ENCODE measurements at regions of chr1 and their contacts with region 1.

Region 1: DNA sequence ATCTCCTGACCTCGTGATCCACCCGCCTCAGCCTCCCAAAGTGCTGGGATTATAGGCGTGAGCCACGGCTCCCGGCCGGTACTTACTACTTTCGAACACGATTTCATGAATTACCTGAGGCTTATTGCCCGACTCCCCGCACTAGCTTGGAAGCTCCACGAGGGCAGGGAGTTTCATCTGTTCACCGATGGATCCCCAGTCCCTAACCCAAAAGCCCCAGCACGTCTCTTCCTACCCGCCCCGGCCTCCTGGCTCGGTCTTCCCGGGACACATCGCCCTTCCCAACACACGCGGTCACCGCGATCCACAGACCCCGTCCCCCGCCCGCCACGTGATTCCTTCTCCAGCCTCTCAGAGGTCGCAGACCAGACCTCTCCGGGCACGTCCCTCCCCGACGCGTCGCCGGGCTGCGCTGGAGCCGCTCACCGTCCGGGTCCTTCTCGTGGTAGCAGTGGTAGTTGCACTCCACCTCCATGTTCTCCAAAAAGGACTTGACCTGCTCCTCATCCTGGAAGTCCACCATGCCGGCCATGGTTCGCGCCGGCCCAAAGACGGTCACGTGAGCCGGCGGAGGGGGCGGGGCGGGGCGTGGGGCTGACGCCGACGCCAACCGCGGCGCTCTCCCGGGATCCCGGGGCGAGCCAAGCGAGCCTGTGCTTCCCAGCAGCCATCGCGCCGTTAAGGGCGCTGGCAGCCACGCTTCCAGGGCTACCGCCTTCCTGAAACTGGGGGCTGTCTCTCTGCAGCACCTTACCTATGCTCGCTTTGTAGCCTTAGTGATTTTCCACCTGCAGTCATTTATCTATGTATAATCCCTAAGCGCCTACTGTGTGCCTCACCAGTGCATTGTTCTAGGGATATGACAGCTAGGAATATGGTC is at the start of gene COA7:
- DNase-seq: peak; percentile 83
- H3K4me3 Mint-ChIP-seq: peak within 1 kb of the TSS; percentile 93
- H3K27ac Mint-ChIP-seq: peak within 1 kb of the TSS; percentile 83
- H3K4me1 Mint-ChIP-seq: peaks cover 29% of the 10 kb centered on the region
- H3K27me3 Mint-ChIP-seq: no peaks in the 10 kb centered on the region
- total RNA-seq, gene COA7: 17.9 to 18.7 TPM

Region 2: DNA sequence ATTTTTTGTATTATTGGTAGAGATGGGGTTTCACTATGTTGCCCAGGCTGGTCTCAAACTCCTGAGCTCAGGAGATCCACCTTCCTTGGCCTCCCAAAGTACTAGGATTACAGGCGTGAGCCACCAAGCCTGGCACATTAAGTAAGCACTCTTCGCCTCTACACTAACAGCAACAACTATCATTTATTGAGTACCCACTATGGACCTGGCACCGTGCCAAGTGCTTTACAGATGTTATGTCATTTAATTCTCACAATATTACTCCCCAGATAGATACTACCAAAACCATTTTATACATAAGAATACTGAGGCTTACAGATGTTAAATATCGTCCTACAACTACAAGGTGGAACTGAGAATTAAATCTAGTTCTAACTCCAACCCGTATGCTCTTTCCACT is 195.2 kb before region 1 on chr1:
- CTCF ChIA-PET with region 1: no interaction called
- POLR2A ChIA-PET with region 1: no interaction called
- intact Hi-C with region 1: no loop called
- DNase-seq: no peak
- H3K4me3 Mint-ChIP-seq: no peak overlapping the region
- H3K27ac Mint-ChIP-seq: no peak overlapping the region
- H3K4me1 Mint-ChIP-seq: no peaks in the 10 kb centered on the region
- H3K27me3 Mint-ChIP-seq: no peaks in the 10 kb centered on the region

Region 3: DNA sequence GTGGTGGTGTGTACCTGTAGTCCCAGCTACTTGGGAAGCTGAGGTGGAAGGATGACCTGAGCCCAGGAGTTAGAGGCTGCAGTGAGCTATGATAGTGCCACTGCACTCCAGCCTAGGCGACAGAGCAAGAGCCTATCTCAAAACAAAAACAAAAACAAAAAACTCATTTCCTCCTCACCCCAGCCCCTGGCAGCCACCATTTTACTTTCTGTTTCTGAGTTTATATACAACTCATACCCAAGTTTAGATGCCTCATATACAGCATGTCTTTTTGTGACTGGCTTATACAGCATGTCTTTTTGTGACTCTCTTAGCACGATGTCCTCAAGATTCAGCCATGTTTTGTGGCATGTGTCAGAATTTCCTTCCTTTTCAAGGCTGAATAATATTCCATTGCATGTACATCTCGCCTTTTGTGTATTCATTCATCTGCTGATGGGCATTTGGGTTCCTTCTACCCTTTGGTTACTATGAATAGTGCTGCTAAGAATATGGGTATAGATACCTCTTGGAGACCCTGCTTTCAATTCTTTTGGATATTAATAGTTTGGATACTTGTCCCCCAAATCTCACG is 14.6 kb before region 1 on chr1:
- CTCF ChIA-PET with region 1: interaction called, 16 read pairs
- POLR2A ChIA-PET with region 1: interaction called, 4 read pairs
- intact Hi-C with region 1: no loop called
- DNase-seq: no peak
- H3K4me3 Mint-ChIP-seq: no peak overlapping the region
- H3K27ac Mint-ChIP-seq: peak overlapping the region; percentile 28
- H3K4me1 Mint-ChIP-seq: peaks cover 6% of the 10 kb centered on the region
- H3K27me3 Mint-ChIP-seq: no peaks in the 10 kb centered on the region

Region 4: DNA sequence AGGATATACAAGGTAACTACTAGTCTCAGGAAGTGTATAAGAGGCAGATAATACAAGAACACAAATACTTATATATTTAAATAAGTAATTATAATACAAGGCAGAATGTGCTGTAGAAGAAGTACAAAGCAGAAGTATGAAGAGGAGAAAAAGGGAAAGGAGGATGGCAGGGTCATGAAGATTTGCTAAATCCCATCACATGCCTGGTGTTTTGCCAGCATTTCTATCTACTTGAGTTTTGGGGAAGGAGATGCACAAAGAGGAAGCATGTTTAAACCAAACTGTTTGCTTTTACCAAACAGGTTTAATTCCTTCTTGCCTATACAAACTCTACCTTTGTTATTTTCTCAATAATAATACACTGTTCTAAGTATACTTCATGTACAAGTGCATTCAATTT is 303.1 kb after region 1 on chr1:
- CTCF ChIA-PET with region 1: no interaction called
- POLR2A ChIA-PET with region 1: no interaction called
- intact Hi-C with region 1: no loop called
- DNase-seq: no peak
- H3K4me3 Mint-ChIP-seq: no peak overlapping the region
- H3K27ac Mint-ChIP-seq: no peak overlapping the region
- H3K4me1 Mint-ChIP-seq: no peaks in the 10 kb centered on the region
- H3K27me3 Mint-ChIP-seq: no peaks in the 10 kb centered on the region

Region 5: DNA sequence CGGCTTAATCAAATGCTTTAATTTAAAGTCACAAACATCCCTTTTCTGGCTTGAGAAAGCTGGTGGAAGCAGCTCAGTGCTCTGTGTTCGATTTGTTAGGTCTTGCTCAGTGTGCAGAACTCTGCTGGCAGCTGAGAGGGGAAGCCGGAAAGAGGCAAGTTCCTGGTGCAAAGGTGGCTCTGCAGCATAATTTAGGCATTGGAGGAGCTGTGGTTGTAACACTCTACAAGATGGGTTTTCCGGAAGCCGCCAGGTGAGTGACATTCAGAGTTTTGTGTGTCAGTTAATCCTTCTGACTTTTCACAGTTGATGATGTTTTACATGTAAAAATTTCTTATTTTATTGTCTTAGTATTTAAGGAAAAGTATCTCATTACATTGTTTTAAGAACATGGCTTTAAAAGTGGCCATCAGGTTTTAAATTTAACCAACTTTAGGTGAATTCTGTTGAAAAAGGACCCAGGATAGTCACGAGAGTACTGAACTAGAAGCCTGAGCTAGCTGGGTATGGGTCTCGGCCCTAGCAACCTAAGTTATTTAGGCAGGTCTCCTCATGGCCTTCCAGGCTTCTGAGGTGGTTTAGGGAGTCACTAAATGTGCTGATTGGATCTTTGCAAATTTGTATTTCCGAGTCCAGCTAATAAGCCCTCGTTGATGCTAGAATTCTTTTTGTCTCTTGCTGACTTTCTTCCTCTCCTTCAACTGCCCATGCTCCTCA is 316.9 kb after region 1 on chr1:
- CTCF ChIA-PET with region 1: no interaction called
- POLR2A ChIA-PET with region 1: no interaction called
- intact Hi-C with region 1: loop called (anchors 1 kb)
- DNase-seq: peak; percentile 86
- H3K4me3 Mint-ChIP-seq: peak overlapping the region; percentile 72
- H3K27ac Mint-ChIP-seq: peak overlapping the region; percentile 77
- H3K4me1 Mint-ChIP-seq: peaks cover 27% of the 10 kb centered on the region
- H3K27me3 Mint-ChIP-seq: no peaks in the 10 kb centered on the region